Activated naive CD4-positive, alpha-beta T cell treated with anti-CD3 and anti-CD28 coated beads for 36 hours (primary cell): ENCODE measurements at regions of chr2 and their contacts with region 1.

Region 1: GRCh38 chr2:143696651-143697050 is 567.4 kb downstream of the ARHGAP15 start:
- DNase-seq: no peak
- H3K4me3 Mint-ChIP-seq: no peak overlapping the region
- H3K27ac Mint-ChIP-seq: no peak overlapping the region
- H3K4me1 Mint-ChIP-seq: peaks cover 39% of the 10 kb centered on the region
- H3K27me3 Mint-ChIP-seq: no peaks in the 10 kb centered on the region

Region 2: GRCh38 chr2:143468341-143468888 is 228.2 kb before region 1 on chr2:
- CTCF ChIA-PET with region 1: no interaction called
- intact Hi-C with region 1: loop called (anchors 1 kb)
- DNase-seq: no peak
- H3K4me3 Mint-ChIP-seq: peak overlapping the region; percentile 12
- H3K27ac Mint-ChIP-seq: peak overlapping the region; percentile 50
- H3K4me1 Mint-ChIP-seq: peaks cover 28% of the 10 kb centered on the region
- H3K27me3 Mint-ChIP-seq: no peaks in the 10 kb centered on the region

Region 3: GRCh38 chr2:143632751-143633374 is 63.8 kb before region 1 on chr2:
- CTCF ChIA-PET with region 1: interaction called, 4 read pairs
- intact Hi-C with region 1: loop called (anchors 1 kb)
- DNase-seq: no peak
- H3K4me3 Mint-ChIP-seq: no peak overlapping the region
- H3K27ac Mint-ChIP-seq: peak overlapping the region; percentile 2
- H3K4me1 Mint-ChIP-seq: peaks cover 14% of the 10 kb centered on the region
- H3K27me3 Mint-ChIP-seq: no peaks in the 10 kb centered on the region

Region 4: DNA sequence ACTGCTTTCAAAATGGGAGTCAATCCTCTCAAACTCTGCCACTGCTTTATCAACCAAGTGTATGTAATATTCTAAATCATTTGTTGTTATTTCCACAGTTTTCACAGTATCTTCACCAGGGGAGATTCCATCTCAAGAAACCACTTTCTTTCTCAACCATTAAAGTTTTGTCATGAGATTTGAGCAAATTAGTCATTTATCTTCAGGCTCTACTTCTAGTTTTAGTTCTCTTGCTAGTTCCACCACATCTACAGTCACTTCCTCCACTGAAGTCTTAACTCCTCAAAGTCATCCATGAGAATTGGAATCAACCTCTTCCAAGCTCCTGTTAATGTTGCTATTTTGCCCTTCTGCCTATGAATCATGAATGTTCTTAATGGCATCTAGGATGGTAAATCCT is 21.6 kb before region 1 on chr2:
- CTCF ChIA-PET with region 1: no interaction called
- intact Hi-C with region 1: loop called (anchors 1 kb)
- DNase-seq: no peak
- H3K4me3 Mint-ChIP-seq: no peak overlapping the region
- H3K27ac Mint-ChIP-seq: no peak overlapping the region
- H3K4me1 Mint-ChIP-seq: peaks cover 20% of the 10 kb centered on the region
- H3K27me3 Mint-ChIP-seq: no peaks in the 10 kb centered on the region

Region 5: DNA sequence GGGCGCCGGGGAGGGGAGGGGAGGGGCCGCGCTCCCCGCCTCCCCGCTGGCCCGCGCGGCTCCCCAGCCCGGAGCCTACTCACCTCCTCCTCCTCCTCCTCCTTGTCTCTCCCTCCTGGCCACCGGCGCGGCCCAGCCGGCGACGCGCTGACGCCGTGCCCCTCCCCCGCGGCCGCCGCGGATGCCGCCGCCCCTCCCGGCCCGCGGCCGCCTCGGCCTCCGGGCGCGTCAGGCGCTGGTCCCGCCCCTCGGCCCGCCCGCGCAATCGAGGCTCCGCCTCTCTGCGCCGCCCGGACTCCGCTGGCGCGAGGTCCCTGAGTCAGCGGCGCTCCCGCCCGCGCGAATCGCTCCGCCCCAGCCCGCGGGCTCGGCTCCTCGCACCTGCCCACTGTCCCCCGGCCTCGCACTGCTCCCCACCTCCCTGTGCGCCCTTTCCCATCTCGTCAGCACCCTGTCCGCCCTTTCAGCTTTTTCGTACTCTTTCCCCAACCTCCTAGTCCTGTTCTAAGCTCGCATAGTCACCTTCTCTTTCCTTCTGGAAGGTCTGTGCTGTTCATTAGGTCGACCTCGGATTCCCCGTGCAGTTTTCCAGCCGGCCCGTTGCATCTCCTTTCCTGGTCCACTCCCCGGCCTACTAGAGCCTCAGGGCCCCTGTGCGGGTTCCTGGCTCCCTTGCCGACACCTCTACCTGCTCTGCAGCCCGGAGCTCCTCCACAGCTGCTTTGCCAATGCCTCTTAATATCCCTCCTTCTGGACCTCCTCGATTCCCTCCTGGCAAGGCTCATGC is 635.9 kb after region 1 on chr2:
- CTCF ChIA-PET with region 1: no interaction called
- intact Hi-C with region 1: loop called (anchors 5 kb)
- DNase-seq: peak; percentile 83
- H3K4me3 Mint-ChIP-seq: peak overlapping the region; percentile 79
- H3K27ac Mint-ChIP-seq: peak overlapping the region; percentile 78
- H3K4me1 Mint-ChIP-seq: peaks cover 19% of the 10 kb centered on the region
- H3K27me3 Mint-ChIP-seq: no peaks in the 10 kb centered on the region